ENCODE measurements at regions of chr7 and their contacts with region 1.

Region 1: GRCh38 chr7:125046767-125047166 is 117.1 kb upstream of the POT1 start:
- DNase-seq: no peak
- H3K4me3 ChIP-seq: no peak overlapping the region
- H3K4me3 Mint-ChIP-seq: no peak overlapping the region
- H3K27ac Mint-ChIP-seq: no peak overlapping the region
- H3K4me1 ChIP-seq: no peaks in the 10 kb centered on the region
- H3K4me1 Mint-ChIP-seq: no peaks in the 10 kb centered on the region
- H3K27me3 ChIP-seq: no peaks in the 10 kb centered on the region
- H3K27me3 Mint-ChIP-seq: peaks cover 8% of the 10 kb centered on the region
- CTCF ChIP-seq: no peak

Region 2: GRCh38 chr7:125316466-125316865 is 269.7 kb after region 1 on chr7:
- CTCF ChIA-PET with region 1: no interaction called
- POLR2A ChIA-PET with region 1: no interaction called
- intact Hi-C with region 1: loop called (anchors 1 kb)
- DNase-seq: peak; percentile 67 to 75
- H3K4me3 ChIP-seq: no peak overlapping the region
- H3K4me3 Mint-ChIP-seq: no peak overlapping the region
- H3K27ac Mint-ChIP-seq: no peak overlapping the region
- H3K4me1 ChIP-seq: no peaks in the 10 kb centered on the region
- H3K4me1 Mint-ChIP-seq: no peaks in the 10 kb centered on the region
- H3K27me3 ChIP-seq: no peaks in the 10 kb centered on the region
- H3K27me3 Mint-ChIP-seq: peaks cover 5% of the 10 kb centered on the region
- CTCF ChIP-seq: peak; percentile 34 to 60

Measured in Caco-2 (cell line).